ENCODE measurements at regions of chr2 and their contacts with region 1.

Region 1: DNA sequence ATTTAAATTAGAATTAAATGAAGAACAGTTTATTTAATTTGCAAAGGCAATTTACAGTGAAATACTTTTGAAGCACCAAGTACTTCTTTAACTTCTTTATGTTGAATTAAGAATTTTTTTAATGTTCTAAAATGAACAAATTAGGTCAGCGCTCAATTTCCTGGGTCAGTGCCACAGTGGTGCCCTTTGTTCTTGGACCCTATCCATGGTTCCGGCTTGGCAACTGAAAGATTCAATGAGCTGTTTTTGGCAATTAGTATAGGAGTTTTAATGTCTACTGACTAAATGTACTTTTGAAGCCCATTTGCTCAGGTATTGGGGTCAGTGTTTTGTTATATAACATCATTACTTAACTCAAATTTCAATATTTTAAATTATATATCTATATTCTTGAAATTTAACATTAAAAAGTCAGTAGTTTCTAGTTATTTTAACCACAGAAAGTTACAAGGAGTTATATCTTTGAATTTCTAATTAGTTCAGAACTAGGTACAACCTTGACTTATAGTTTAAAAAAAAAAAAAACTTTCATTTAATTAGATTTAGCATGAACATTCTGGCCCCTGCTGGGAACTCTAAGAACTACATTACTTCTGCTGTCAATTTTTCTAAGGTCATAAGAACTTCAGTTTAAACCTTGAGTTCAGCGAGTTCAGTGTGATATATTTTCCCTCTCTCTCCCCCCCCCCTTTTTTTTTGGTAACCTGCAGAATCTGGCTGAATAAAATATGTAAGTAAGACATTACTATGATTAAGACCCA is 7.6 kb upstream of the MSTN start:
- DNase-seq: no peak
- H3K4me3 ChIP-seq: no peak overlapping the region
- H3K27ac ChIP-seq: no peak overlapping the region
- H3K4me1 ChIP-seq: peaks cover 0 to 3% (median 0%) of the 10 kb centered on the region in 4 donors
- H3K27me3 ChIP-seq: no peaks in the 10 kb centered on the region
- CTCF ChIP-seq: peak in 2 of 4 experiments; percentile 37 to 49
- EP300 ChIP-seq: no peak
- POLR2A ChIP-seq: no peak

Region 2: GRCh38 chr2:189798312-189799029 is 271.6 kb before region 1 on chr2:
- intact Hi-C with region 1: loop called (anchors 2 kb)
- DNase-seq: no peak
- H3K4me3 ChIP-seq: no peak overlapping the region
- H3K27ac ChIP-seq: peak overlapping the region in 3 of 4 donors; percentile 5 to 36 (median 10)
- H3K4me1 ChIP-seq: peaks cover 0 to 16% (median 4%) of the 10 kb centered on the region in 4 donors
- H3K27me3 ChIP-seq: no peaks in the 10 kb centered on the region
- CTCF ChIP-seq: peak in 1 of 4 experiments; percentile 31
- EP300 ChIP-seq: no peak
- POLR2A ChIP-seq: no peak

Region 3: GRCh38 chr2:189913821-189914220 is 156.3 kb before region 1 on chr2:
- intact Hi-C with region 1: no loop called
- DNase-seq: no peak
- H3K4me3 ChIP-seq: no peak overlapping the region
- H3K27ac ChIP-seq: no peak overlapping the region
- H3K4me1 ChIP-seq: no peaks in the 10 kb centered on the region
- H3K27me3 ChIP-seq: no peaks in the 10 kb centered on the region
- CTCF ChIP-seq: no peak
- EP300 ChIP-seq: no peak
- POLR2A ChIP-seq: no peak